ENCODE measurements at regions of chr9 and their contacts with region 1.

Region 1: DNA sequence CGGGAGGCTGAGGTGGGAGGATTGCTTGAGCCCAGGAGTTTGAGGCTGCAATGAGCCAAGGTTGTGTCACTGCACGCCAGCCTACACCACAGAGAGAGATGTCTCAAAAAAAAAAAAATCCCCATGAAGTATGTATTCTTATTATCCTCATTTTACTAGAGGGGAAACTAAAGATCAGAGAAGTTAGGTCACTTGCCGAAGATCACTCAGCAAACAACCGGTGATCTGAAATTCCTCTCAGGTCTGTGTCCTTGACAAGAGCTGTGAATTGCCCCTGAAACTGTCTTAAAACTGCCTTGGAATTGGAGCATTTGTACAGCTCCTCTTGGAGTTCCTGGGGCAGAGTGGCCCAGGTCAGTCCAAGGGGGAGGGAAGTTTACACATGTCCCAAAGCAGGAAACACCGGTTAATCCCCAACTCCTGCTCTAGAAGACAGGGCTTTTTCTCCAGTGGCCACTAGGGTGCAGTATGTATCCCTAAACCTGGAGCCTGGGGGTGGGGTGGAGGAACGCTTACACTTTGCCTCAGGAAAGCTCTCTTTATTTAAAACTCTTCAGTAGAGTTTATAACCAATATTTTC is 27.6 kb downstream of the AQP7 start:
- DNase-seq: peak in 4 of 5 donors; percentile 65 to 80 (median 76)
- ATAC-seq: peak; percentile 68 to 81 (median 78)
- H3K4me3 ChIP-seq: peak overlapping the region in 5 of 12 donors; percentile 18 to 40 (median 32)
- H3K27ac ChIP-seq: peak overlapping the region in 8 of 12 donors; percentile 18 to 70 (median 51)
- H3K4me1 ChIP-seq: peaks cover 0 to 25% (median 15%) of the 10 kb centered on the region in 12 donors
- H3K27me3 ChIP-seq: no peaks in the 10 kb centered on the region
- CTCF ChIP-seq: peak; percentile 81 to 94 (median 88)
- POLR2A ChIP-seq: no peak

Region 2: GRCh38 chr9:33139421-33140228 is 235.1 kb before region 1 on chr9:
- intact Hi-C with region 1: no loop called
- DNase-seq: peak; percentile 83 to 91 (median 88)
- ATAC-seq: peak; percentile 65 to 83 (median 80)
- H3K4me3 ChIP-seq: peak overlapping the region in 3 of 12 donors; percentile 0 to 11 (median 7)
- H3K27ac ChIP-seq: peak overlapping the region; percentile 38 to 84 (median 76)
- H3K4me1 ChIP-seq: peaks cover 35 to 100% (median 97%) of the 10 kb centered on the region in 12 donors
- H3K27me3 ChIP-seq: no peaks in the 10 kb centered on the region
- CTCF ChIP-seq: no peak
- POLR2A ChIP-seq: no peak

Region 3: GRCh38 chr9:33331377-33331891 is 43.3 kb before region 1 on chr9:
- intact Hi-C with region 1: no loop called
- DNase-seq: no peak
- ATAC-seq: no peak
- H3K4me3 ChIP-seq: no peak overlapping the region
- H3K27ac ChIP-seq: no peak overlapping the region
- H3K4me1 ChIP-seq: peaks cover 0 to 19% (median 6%) of the 10 kb centered on the region in 12 donors
- H3K27me3 ChIP-seq: no peaks in the 10 kb centered on the region
- CTCF ChIP-seq: no peak
- POLR2A ChIP-seq: no peak

Region 4: DNA sequence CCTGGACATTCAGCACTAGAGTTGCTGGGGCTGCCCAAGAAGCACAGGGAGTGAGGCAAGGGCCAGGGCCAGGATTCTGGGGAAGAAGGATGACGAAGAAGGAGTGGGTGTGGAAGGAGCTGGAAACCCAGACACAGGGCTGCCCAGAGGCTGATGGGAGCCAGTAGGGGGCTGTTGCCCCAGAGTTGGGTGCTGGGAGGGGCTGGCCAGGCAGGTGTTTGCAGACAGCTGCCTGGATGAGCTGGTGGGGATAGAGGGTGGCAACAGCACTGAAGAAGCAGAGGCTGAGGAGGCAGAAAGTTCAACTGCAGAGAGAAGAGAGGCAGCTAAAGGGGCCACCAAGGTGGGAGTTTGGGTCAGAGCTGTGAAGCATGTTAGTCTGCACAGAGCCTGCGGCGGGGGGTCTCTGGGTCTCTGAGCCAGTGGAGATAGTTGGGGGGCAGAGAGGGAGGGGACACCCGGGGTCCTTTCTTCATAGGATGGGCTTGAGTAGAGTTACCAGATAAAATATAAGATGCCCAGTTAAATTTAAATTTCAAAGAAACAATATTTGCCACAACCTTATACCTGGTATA is 30.2 kb after region 1 on chr9:
- intact Hi-C with region 1: loop called in 1 of 10 experiments (anchors 2 kb)
- DNase-seq: no peak
- ATAC-seq: peak in 3 of 4 donors; percentile 21 to 38 (median 35)
- H3K4me3 ChIP-seq: no peak overlapping the region
- H3K27ac ChIP-seq: peak overlapping the region; percentile 10 to 98 (median 92)
- H3K4me1 ChIP-seq: peaks cover 0 to 49% (median 27%) of the 10 kb centered on the region in 12 donors
- H3K27me3 ChIP-seq: no peaks in the 10 kb centered on the region
- CTCF ChIP-seq: no peak
- POLR2A ChIP-seq: no peak

Region 5: GRCh38 chr9:33415501-33416038 is 40.8 kb after region 1 on chr9:
- intact Hi-C with region 1: loop called (anchors 1 to 5 kb)
- DNase-seq: peak; percentile 65 to 87 (median 73)
- ATAC-seq: peak; percentile 44 to 87 (median 78)
- H3K4me3 ChIP-seq: no peak overlapping the region
- H3K27ac ChIP-seq: peak overlapping the region in 1 of 12 donors; percentile 40
- H3K4me1 ChIP-seq: peaks cover 0 to 15% (median 5%) of the 10 kb centered on the region in 12 donors
- H3K27me3 ChIP-seq: no peaks in the 10 kb centered on the region
- CTCF ChIP-seq: peak; percentile 64 to 84 (median 76)
- POLR2A ChIP-seq: no peak

Region 6: GRCh38 chr9:33426843-33427293 is 52.1 kb after region 1 on chr9:
- intact Hi-C with region 1: no loop called
- DNase-seq: no peak
- ATAC-seq: peak in 1 of 4 donors; percentile 18
- H3K4me3 ChIP-seq: no peak overlapping the region
- H3K27ac ChIP-seq: no peak overlapping the region
- H3K4me1 ChIP-seq: peaks cover 0 to 11% (median 0%) of the 10 kb centered on the region in 12 donors
- H3K27me3 ChIP-seq: no peaks in the 10 kb centered on the region
- CTCF ChIP-seq: no peak
- POLR2A ChIP-seq: no peak

Region 7: DNA sequence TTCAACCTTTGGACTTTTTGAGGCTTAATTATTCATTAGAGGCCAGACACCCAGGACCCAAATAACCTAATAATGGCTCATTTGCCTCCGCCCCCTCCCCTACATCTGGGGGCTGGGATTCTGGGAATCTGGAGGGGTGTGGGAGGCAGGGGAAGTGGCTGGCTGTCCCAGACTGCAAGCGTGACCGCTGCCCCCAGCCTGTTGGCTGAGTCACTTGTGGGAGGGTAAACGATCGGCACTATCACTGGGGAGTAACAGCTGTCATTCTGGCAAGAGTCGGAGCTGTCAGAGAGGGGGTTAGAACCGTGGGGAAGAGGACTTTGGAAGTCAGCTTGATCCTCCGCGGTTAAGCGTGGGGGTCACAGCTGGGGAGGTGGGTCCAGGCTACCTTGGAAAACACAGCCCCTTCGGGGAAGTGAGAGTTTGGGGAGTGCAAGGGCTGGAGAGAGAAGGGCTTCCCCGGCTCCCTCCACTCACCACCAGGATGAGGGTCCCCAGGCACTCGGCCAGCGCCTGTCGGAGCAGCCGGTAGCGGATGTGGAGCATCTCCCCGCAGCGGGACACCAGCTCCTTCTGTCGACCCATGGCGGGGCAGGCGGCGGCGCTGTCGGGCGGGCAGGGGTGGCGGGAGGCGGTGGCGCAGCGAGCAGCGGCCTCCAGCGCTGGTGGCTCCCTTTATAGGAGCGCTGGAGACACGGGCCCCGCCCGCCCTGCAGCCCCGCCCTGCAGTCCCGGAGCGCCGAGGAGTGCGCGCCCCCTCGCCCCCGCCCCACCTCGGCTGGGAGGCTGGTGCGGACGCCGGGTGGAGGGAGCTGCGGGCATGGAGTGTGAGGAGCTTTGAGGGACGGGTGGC is 72.4 kb after region 1 on chr9 and contains the start of gene AQP3:
- intact Hi-C with region 1: loop called in 2 of 10 experiments (anchors 1 to 5 kb)
- DNase-seq: peak; percentile 63 to 84 (median 72)
- ATAC-seq: peak; percentile 70 to 87 (median 86)
- H3K4me3 ChIP-seq: peak within 1 kb of the TSS; percentile 26 to 67 (median 58)
- H3K27ac ChIP-seq: peak within 1 kb of the TSS in 11 of 12 donors; percentile 38 to 80 (median 63)
- H3K4me1 ChIP-seq: peaks cover 0 to 27% (median 12%) of the 10 kb centered on the region in 12 donors
- H3K27me3 ChIP-seq: no peaks in the 10 kb centered on the region
- CTCF ChIP-seq: peak in 11 of 12 donors; percentile 12 to 51 (median 31)
- POLR2A ChIP-seq: peak in 1 of 2 donors; percentile 13
- total RNA-seq, gene AQP3: 6.0 to 116 (median 13.3) TPM

Region 8: GRCh38 chr9:33452828-33453271 is 78.1 kb after region 1 on chr9:
- intact Hi-C with region 1: loop called in 2 of 10 experiments (anchors 1 to 5 kb)
- DNase-seq: peak in 4 of 5 donors; percentile 37 to 72 (median 54)
- ATAC-seq: peak in 3 of 4 donors; percentile 62 to 69 (median 63)
- H3K4me3 ChIP-seq: no peak overlapping the region
- H3K27ac ChIP-seq: no peak overlapping the region
- H3K4me1 ChIP-seq: peaks cover 0 to 10% (median under 1%) of the 10 kb centered on the region in 12 donors
- H3K27me3 ChIP-seq: no peaks in the 10 kb centered on the region
- CTCF ChIP-seq: peak; percentile 38 to 65 (median 58)
- POLR2A ChIP-seq: no peak

Region 9: DNA sequence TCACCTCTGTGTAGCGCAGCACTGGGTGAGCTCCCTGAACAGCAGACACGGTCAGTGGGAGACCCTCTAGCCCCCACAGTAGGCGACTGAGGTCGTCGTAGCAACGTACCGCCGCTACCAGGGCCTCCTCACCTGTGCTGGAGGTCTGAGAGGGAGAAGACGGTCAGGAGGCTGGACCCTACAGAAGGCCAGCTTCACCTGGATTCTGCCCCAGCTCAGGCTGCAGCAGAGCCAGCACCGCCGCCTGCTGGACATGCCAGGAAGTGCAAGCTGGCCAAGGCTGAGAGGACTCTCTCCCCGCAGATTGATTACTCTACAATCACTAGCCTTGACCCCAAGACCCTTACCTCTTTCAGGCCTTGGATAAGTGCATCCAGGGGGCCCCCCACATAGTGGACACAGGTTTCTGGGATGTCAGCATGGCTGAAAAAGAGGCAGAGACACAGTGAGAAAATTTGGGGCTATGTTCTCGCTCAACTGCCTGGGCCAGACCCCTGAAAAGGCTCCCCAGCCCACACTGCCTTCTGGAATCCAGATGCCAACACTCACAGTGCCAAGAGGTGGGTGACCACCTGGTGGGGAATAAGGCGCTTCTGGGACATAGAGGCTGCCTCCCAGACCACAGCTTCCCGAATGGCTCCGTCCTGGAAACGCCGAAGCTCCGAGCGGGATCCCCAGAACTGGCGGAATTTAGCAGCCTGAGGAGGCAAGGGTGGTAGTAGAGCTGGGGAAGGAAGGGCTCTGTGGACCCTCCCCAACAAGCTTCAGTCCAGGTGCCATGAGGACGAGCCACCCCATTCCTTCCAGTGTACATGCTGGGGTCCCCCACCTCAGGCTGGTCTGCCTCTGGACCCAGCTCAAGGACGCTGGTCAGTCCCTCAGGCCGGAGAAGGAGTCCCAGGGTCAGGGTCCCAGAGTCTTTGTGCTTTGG is 92.1 kb after region 1 on chr9:
- intact Hi-C with region 1: loop called (anchors 2 to 5 kb)
- DNase-seq: peak; percentile 50 to 84 (median 57)
- ATAC-seq: peak; percentile 28 to 68 (median 46)
- H3K4me3 ChIP-seq: no peak overlapping the region
- H3K27ac ChIP-seq: no peak overlapping the region
- H3K4me1 ChIP-seq: peaks cover 0 to 6% (median 0%) of the 10 kb centered on the region in 12 donors
- H3K27me3 ChIP-seq: no peaks in the 10 kb centered on the region
- CTCF ChIP-seq: peak; percentile 84 to 95 (median 89)
- POLR2A ChIP-seq: no peak

Region 10: DNA sequence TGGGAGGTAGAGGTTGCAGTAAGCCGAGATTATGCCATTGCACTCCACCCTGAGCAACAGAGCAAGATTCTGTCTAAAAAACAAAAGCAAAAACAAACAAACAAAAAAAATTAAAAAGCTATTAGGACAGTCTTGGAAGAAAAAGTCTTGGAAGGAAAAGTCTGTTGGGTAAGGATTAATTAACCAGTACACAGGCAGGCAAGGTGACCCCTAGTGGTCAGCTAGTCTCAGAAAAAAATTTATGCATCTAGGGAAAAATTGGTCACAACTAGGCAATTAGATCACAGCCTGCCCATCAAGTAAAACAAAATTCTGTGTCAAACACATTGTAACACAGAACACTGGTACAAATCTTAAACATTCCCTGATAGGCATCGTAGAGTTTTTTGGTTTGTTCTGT is 142.6 kb after region 1 on chr9:
- intact Hi-C with region 1: loop called in 1 of 10 experiments (anchors 5 kb)
- DNase-seq: no peak
- ATAC-seq: peak in 1 of 4 donors; percentile 41
- H3K4me3 ChIP-seq: no peak overlapping the region
- H3K27ac ChIP-seq: no peak overlapping the region
- H3K4me1 ChIP-seq: no peaks in the 10 kb centered on the region
- H3K27me3 ChIP-seq: peaks cover 0 to 15% (median 1%) of the 10 kb centered on the region in 9 donors
- CTCF ChIP-seq: peak; percentile 37 to 72 (median 58)
- POLR2A ChIP-seq: no peak